HEK293 (cell line): ENCODE measurements at regions of chr1 and their contacts with region 1.

Region 1: GRCh38 chr1:213564215-213564659 is 423.5 kb upstream of the PROX1 start:
- H3K4me3 ChIP-seq: no peak overlapping the region
- H3K27ac ChIP-seq: no peak overlapping the region
- H3K4me1 ChIP-seq: no peaks in the 10 kb centered on the region
- CTCF ChIP-seq: no peak

Region 2: DNA sequence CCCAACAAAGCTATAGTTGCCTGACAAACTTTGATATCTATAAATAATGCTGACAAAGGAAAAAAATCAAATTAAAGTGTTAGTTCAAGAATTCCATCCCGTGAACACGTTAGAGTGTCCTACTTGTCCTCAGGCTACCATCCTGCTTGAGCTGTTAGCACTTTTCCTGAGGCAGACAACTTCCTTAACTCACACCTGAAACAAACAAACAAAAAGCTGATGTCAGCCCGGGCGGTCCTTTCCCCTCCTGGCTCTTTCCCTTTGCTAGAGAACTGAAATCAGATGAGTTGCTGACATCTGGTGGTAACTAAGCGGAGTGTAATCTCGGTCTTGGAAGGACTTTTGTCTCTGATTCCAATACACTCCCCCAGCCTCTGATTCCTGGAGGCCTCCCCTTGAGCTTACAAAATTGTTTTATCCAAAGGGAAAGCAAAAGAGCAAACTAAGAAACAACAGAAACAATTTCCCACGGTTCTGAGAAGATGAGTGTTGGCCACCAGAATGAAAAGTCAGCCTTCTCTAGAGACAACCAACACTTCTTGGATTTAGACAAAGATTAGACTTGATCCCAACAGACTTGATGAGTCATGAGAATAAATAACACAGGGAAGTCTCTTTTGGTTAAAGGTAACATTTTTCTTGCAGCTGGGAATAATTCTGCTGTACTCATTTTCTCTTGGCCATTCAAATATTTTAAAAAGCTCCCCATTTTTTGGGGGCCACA is 559.0 kb after region 1 on chr1:
- CTCF ChIA-PET with region 1: interaction called, 13 read pairs
- POLR2A ChIA-PET with region 1: no interaction called
- H3K4me3 ChIP-seq: no peak overlapping the region
- H3K27ac ChIP-seq: no peak overlapping the region
- H3K4me1 ChIP-seq: peaks cover 6% of the 10 kb centered on the region; the same call in 1 of the 2 replicates
- CTCF ChIP-seq: peak; percentile 73